ENCODE measurements at regions of chr2 and their contacts with region 1.

Region 1: DNA sequence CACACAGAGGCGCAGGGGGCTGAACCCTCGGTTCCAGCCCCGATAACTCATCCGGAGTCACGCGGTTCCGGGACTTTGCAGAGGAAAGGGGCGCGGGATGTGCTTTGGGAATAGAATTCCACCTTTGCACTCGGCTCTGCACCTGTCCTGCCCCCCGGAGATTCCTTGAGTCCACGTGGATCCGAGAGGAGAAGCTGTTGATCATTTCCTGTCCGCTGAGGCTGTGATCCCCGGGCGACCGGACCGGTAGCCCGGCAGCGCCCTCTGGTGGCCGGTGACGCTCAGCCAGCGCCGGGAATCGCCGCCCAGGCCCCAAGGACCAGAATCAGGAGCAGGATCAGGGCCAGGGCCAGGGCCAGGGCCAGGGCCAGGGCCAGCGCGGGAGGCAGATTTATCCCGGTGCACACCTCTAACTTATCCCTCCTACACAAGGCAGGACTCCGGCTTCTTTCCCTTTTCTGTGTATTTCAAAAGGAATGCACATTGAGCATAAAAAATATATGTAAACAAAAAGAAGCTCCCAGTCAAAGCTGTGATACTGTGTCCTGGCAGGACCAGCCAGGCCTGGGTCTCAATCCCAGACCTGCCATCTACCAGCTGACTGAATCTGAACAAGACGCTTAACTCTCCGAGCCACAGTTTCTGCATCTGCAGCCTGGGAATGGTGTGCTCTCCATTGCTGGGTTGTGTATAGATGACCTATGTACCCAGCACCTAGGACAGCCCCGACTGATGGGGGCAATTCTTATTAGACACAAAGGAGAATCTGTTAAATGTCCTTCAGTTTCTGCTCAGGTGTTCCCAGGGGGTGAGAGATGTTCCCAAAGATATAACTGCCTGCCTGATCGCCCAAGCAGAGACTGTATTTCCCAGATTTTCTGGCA is 8.5 kb upstream of the SPATA3 start:
- H3K4me3 ChIP-seq: peak overlapping the region; percentile 41
- H3K27ac ChIP-seq: no peak overlapping the region
- H3K4me1 ChIP-seq: 0 out of 2 replicates have a peak, but pooled peaks cover 3% of the 10 kb centered on the region
- CTCF ChIP-seq: peak; percentile 90

Region 2: DNA sequence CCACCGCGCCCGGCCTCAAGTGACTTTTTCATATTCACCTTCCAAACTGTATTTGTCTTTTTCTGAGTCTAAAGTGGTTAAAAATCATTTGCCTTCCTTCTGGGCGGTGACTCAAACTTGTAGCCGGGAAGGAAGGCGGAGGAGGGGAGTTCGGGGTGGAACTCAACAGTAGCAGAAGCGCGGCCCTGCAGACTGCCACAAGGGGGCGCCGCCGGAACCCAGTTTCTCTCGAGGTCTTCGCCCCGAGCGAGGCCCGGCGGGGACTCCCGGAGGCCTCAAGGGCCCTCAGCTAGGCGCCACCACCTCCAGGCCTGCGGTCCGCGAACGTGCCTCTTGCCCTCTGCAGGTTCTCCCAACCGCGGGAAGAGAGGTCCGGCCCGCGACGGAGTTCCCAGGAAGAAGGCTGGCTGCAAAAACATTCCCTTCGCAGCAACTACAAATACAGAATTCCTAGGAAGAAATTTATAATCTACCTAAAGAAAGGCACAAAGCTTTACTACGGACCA is 139.4 kb before region 1 on chr2:
- CTCF ChIA-PET with region 1: interaction called, 35 read pairs
- POLR2A ChIA-PET with region 1: no interaction called
- H3K4me3 ChIP-seq: no peak overlapping the region
- H3K27ac ChIP-seq: no peak overlapping the region
- H3K4me1 ChIP-seq: no peaks in the 10 kb centered on the region
- CTCF ChIP-seq: peak; percentile 84

Region 3: DNA sequence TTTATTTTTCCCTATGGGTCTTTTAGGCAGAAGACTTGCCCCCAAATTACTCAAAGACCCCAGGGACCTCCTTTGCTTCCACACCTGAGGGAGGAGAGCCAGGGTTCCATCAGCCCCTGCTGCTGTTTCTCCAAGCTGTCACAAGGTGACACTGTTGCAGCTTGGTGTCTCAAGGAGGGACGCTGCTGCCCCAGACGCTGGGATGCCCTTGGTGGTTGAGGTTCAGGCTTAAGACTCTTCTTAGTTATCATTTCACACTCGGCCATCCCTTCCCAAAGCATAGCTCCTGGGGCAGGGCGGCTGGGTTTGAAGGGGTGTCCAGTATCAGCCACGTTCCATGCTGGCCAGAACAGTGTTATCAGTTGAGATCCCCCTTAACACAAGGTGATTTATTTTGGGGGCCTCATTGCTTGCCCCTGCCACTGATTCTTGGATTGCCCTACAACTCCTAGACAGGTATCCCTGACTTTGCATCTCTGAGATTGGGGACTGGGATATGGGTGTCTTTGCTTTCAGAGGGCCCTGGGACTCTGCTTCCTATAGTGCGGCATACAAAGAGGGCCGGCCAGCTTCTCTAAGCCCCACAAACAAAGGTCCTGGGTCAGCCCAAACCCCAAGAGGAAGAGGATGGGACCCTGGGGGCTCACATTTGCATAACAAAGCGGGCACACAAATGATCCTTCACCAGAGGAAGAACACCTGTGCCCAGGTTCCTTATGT is 85.0 kb before region 1 on chr2:
- CTCF ChIA-PET with region 1: interaction called, 55 read pairs
- POLR2A ChIA-PET with region 1: no interaction called
- H3K4me3 ChIP-seq: no peak overlapping the region
- H3K27ac ChIP-seq: no peak overlapping the region
- H3K4me1 ChIP-seq: no peaks in the 10 kb centered on the region
- CTCF ChIP-seq: peak; percentile 78

Region 4: DNA sequence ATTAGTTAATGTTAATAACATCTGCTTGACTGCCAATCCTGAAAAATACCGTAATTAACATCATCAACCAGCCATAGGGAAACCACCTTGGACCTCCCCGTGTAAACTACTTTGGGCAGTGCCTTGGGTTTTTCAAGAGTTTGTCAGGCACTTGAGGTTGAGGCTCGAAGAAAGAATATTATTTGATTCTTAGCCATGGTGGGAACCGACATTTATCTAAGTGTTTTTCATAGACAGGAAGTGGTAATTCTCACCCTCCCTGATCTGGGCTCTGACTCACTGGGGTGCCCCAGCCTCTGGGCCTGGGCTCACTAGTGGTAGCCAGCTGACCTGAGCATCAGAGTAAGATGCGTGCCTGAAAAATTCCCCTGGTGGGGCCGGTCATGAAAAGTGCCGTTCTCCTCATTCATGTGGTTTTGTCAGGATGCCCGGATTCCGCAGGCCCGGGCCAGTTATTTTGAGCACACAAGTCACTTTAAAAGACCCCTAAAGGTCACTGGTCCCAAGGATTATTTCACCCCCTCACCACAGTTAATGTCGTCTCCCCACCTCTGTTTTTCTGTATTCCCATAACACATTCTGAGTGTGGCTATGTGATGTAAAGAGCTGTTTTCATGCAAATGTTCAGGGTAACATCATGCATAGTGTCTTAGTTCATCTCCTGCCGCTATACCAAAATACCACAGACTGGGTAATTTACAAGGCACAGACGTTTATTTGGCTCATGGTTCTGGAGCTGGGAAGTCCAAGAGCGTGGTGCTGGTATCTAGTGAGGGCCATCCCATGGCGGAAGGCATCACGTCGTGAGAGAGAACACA is 13.1 kb before region 1 on chr2:
- CTCF ChIA-PET with region 1: interaction called, 13 read pairs
- POLR2A ChIA-PET with region 1: no interaction called
- H3K4me3 ChIP-seq: no peak overlapping the region
- H3K27ac ChIP-seq: no peak overlapping the region
- H3K4me1 ChIP-seq: no peaks in the 10 kb centered on the region
- CTCF ChIP-seq: no peak